Dendritic cell treated with granulocyte-macrophage colony-stimulating factor and Interleukin-4, amounts not matched to agents 40 ng/mL and 50 ng/mL, for 4 days (primary cell): ENCODE measurements at regions of chr12 and their contacts with region 1.

Region 1: GRCh38 chr12:650983-651382 is 12.3 kb downstream of the NINJ2 start:
- H3K4me3 Mint-ChIP-seq: no peak overlapping the region
- H3K27ac Mint-ChIP-seq: no peak overlapping the region
- H3K4me1 Mint-ChIP-seq: peaks cover 18% of the 10 kb centered on the region
- H3K27me3 Mint-ChIP-seq: no peaks in the 10 kb centered on the region

Region 2: DNA sequence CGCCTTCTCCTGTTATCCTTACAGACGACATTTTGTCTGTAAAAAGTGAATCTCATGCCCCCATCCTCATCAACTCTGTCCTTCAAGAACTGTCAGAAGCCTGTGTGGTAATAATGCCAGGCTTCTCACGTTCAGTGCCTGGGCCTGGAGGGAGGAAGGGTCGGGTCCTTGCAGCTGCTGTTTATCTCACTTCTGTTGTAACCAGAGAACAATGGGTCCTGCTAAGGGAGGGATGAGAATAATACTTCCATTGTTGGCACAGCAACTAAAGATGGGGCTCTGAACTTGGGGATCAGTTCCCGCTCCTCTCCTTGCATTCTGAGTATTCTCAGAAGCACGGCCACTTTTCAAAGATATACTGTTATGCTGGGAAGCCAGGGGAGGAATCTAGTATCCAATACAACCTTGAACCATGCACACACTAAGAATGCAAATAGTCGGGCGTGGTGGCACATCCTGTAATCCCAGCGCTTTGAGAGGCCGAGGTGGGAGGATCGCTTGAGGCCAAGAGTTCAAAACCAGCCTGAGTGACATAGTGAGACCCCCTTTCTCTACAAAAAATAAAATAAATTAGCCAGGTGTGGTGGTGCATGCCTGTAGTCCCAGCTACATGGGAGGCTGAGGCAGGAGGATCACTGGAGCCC is 51.0 kb after region 1 on chr12:
- intact Hi-C with region 1: loop called (anchors 10 kb)
- H3K4me3 Mint-ChIP-seq: no peak overlapping the region
- H3K27ac Mint-ChIP-seq: no peak overlapping the region
- H3K4me1 Mint-ChIP-seq: peaks cover 26% of the 10 kb centered on the region
- H3K27me3 Mint-ChIP-seq: peaks cover 1% of the 10 kb centered on the region